Common myeloid progenitor, CD34-positive (primary cell): ENCODE measurements at regions of chr10 and their contacts with region 1.

Region 1: DNA sequence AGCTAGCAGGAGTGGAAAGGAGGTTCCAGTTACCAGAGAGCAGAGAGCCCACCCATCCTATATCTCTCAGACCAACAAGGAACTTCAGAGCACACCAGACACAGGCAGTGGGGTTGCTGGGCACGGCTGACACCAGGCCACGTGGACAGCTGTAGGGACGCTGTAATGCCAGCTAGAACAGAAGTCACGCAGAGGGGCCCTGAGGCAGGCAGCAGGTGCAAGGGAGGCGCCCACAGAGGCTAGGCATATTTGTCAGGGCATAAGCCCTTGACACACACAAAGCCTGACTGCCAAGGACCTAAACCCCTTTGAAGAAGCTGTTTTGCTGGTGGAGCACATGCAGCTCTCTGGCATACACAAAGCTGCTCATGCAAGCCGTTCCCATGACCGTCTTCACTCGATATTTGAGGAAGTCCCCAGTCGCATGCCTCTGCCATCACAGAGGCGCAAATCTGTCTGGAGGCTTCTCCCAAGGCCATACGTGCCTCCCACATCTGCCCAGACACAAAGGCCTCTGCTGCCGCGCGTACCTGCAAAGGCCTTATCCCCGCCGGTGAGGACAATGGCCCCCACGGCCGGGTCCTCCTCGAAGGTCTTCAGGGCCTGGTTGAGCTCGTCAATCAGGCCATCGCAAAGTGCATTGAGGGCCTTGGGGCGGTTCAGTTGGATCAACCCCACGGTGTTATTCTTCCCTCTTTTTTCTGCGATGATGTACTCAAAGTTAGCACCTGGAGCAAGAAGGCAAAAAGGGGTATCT is 2.9 kb downstream of the ECHS1 start:
- DNase-seq: no peak
- H3K4me3 ChIP-seq: no peak overlapping the region
- H3K27ac ChIP-seq: no peak overlapping the region
- H3K4me1 ChIP-seq: peaks cover 0 to 12% (median 11%) of the 10 kb centered on the region in 4 experiments
- H3K27me3 ChIP-seq: no peaks in the 10 kb centered on the region

Region 2: DNA sequence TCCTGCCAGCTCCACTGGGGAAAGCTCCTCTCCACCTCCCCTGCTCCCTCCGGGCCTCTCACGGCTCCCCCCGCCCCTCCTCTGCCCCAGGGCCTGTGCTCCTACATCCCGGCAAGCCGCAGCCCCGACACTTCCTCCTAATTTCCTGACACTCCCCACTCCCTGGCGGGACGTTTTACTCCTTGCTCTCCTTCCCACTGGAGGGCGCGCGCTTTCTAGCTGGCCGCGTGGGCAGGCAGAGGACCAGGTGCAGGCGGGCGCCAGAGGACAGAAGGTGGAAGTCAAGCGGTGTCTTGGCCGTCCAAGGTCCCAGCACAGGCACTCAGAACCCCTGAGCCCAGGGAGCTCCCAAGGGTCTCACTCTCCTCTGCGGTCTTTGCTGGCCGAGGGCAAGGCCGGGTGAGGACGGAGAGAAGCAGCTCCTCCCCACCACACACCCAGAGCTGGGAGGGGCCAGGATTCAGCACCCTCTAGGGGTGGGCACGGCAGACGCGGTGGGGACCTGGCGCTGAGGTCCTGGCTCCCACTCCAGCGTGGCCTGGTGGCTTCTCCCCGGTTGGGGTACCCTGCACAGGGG is 112.6 kb before region 1 on chr10:
- CTCF ChIA-PET with region 1: no interaction called
- POLR2A ChIA-PET with region 1: no interaction called
- DNase-seq: peak in 2 of 3 donors; percentile 59 to 71
- H3K4me3 ChIP-seq: peak overlapping the region in 4 of 7 experiments; percentile 40 to 52 (median 44)
- H3K27ac ChIP-seq: peak overlapping the region in 1 of 2 experiments; percentile 79
- H3K4me1 ChIP-seq: peaks cover 8 to 66% (median 62%) of the 10 kb centered on the region in 4 experiments
- H3K27me3 ChIP-seq: no peaks in the 10 kb centered on the region

Region 3: GRCh38 chr10:133318494-133319127 is 51.6 kb before region 1 on chr10:
- CTCF ChIA-PET with region 1: no interaction called
- POLR2A ChIA-PET with region 1: no interaction called
- DNase-seq: peak; percentile 69 to 74 (median 73)
- H3K4me3 ChIP-seq: peak overlapping the region in 6 of 7 experiments; percentile 19 to 73 (median 52)
- H3K27ac ChIP-seq: no peak overlapping the region
- H3K4me1 ChIP-seq: peaks cover 0 to 7% (median 1%) of the 10 kb centered on the region in 4 experiments
- H3K27me3 ChIP-seq: peaks cover 0 to 12% (median 2%) of the 10 kb centered on the region in 5 experiments

Region 4: GRCh38 chr10:133359972-133360610 is 10.1 kb before region 1 on chr10:
- CTCF ChIA-PET with region 1: interaction called, 12 read pairs
- POLR2A ChIA-PET with region 1: no interaction called
- DNase-seq: no peak
- H3K4me3 ChIP-seq: no peak overlapping the region
- H3K27ac ChIP-seq: no peak overlapping the region
- H3K4me1 ChIP-seq: peaks cover 0 to 14% (median 12%) of the 10 kb centered on the region in 4 experiments
- H3K27me3 ChIP-seq: no peaks in the 10 kb centered on the region